Ovary (tissue), 10 donors: ENCODE measurements at regions of chr19 and their contacts with region 1.

Region 1: GRCh38 chr19:33771384-33772101 is 25.1 kb upstream of the KCTD15 start:
- DNase-seq: peak; percentile 63 to 81 (median 78)
- H3K4me3 ChIP-seq: no peak overlapping the region
- H3K27ac ChIP-seq: no peak overlapping the region
- H3K4me1 ChIP-seq: no peaks in the 10 kb centered on the region
- H3K27me3 ChIP-seq: no peaks in the 10 kb centered on the region
- CTCF ChIP-seq: peak; percentile 53 to 74 (median 60)
- EP300 ChIP-seq: no peak
- POLR2A ChIP-seq: no peak

Region 2: DNA sequence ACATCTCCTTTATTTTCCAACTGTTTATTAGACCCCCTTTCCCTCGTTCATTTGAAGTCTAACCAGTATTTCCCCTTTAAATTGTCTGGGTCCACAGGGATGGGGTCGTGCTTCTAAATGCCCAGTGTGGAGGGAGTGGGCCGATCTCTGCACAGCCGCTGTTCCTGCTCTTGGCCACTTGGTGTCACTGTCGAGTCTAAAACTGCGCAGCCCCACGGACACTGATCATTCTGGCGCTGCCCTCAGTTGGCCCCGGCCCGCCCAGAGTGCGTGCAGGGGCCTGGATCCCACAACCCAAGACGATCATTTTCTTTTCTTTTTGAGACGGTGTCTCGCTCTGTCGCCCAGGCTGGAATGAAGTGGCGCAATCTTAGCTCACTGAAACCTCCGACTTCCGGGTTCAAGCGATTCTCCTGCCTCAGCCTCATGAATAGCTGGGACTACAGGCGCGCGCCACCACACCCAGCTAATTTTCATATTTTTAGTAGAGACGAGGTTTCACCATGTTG is 627.6 kb before region 1 on chr19:
- intact Hi-C with region 1: loop called in 1 of 4 experiments (anchors 10 kb)
- DNase-seq: peak; percentile 32 to 73 (median 66)
- H3K4me3 ChIP-seq: no peak overlapping the region
- H3K27ac ChIP-seq: no peak overlapping the region
- H3K4me1 ChIP-seq: no peaks in the 10 kb centered on the region
- H3K27me3 ChIP-seq: no peaks in the 10 kb centered on the region
- CTCF ChIP-seq: peak; percentile 78 to 84 (median 81)
- EP300 ChIP-seq: no peak
- POLR2A ChIP-seq: no peak

Region 3: GRCh38 chr19:33241530-33242101 is 529.9 kb before region 1 on chr19:
- intact Hi-C with region 1: loop called in 3 of 4 experiments (anchors 5 to 10 kb)
- DNase-seq: no peak
- H3K4me3 ChIP-seq: no peak overlapping the region
- H3K27ac ChIP-seq: no peak overlapping the region
- H3K4me1 ChIP-seq: no peaks in the 10 kb centered on the region
- H3K27me3 ChIP-seq: no peaks in the 10 kb centered on the region
- CTCF ChIP-seq: peak; percentile 13 to 46 (median 21)
- EP300 ChIP-seq: no peak
- POLR2A ChIP-seq: no peak

Region 4: GRCh38 chr19:33416307-33417215 is 355.0 kb before region 1 on chr19:
- intact Hi-C with region 1: loop called in 2 of 4 experiments (anchors 5 kb)
- DNase-seq: peak; percentile 50 to 70 (median 62)
- H3K4me3 ChIP-seq: no peak overlapping the region
- H3K27ac ChIP-seq: no peak overlapping the region
- H3K4me1 ChIP-seq: no peaks in the 10 kb centered on the region
- H3K27me3 ChIP-seq: no peaks in the 10 kb centered on the region
- CTCF ChIP-seq: peak in 1 of 3 donors; percentile 47
- EP300 ChIP-seq: no peak
- POLR2A ChIP-seq: no peak

Region 5: DNA sequence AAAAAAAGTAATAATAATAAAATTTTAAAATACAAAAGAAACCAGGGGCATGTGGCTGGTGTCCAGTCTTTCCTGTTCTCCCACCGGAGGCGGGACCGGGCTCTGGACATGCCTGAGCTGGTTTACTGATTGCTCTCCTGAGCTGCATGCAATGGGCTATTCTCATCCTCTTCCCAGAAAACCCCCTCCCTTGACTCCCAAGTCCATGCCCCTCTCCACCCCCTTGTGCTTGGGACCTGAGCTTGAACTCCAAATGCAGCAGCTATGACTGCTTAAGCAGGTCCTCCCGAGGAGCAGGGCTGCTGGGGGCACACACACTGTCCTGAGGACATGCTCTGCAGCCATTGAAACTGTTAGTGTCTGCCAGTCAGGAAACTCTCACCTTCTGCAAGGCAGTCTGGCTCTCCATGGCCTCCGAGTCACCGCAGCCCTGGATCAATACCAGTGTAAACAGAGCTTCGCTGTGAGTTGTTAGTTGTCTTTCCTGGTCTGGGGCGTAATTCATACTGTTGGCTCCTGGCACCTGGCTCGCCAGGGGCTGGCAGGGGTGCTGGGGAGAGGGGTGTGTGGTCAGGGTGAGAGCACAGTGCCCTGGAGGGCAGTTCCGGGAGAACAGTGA is 191.4 kb before region 1 on chr19:
- intact Hi-C with region 1: loop called in 1 of 4 experiments (anchors 10 kb)
- DNase-seq: no peak
- H3K4me3 ChIP-seq: no peak overlapping the region
- H3K27ac ChIP-seq: no peak overlapping the region
- H3K4me1 ChIP-seq: no peaks in the 10 kb centered on the region
- H3K27me3 ChIP-seq: no peaks in the 10 kb centered on the region
- CTCF ChIP-seq: no peak
- EP300 ChIP-seq: no peak
- POLR2A ChIP-seq: no peak

Region 6: GRCh38 chr19:33621811-33622504 is 149.6 kb before region 1 on chr19 and contains the start of gene CHST8:
- intact Hi-C with region 1: no loop called
- DNase-seq: peak in 4 of 5 donors; percentile 36 to 71 (median 65)
- H3K4me3 ChIP-seq: peak within 1 kb of the TSS; percentile 1
- H3K27ac ChIP-seq: no peak within 1 kb of the TSS
- H3K4me1 ChIP-seq: peaks cover 8% of the 10 kb centered on the region
- H3K27me3 ChIP-seq: no peaks in the 10 kb centered on the region
- CTCF ChIP-seq: no peak
- EP300 ChIP-seq: no peak
- POLR2A ChIP-seq: no peak
- total RNA-seq, gene CHST8: 0.48 to 2.5 (median 0.99) TPM

Region 7: DNA sequence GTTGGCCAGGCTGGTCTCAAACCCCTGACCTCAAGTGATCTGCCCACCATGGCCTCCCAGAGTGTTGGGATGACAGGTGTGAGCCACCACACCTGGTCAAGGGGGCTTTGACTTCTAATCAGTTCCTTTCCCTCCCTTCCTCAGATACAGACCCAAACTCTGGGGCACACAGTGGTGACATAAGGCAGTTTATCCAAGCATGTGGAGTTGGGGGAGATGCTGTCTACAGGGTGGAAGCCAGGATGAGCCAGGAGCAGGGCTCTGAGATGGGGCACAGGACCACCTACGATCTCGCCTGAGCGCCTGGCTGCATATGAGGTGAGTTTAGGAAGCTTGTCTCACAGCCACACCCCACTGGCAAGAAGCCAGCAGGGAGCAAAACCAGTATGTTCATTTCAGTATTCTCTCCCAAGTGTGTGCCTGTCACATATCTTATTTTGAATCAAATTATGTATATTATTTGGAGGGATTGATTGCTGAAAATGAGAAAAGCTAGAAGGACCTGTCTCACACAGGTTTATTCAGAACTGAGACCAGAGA is 92.8 kb after region 1 on chr19:
- intact Hi-C with region 1: no loop called
- DNase-seq: no peak
- H3K4me3 ChIP-seq: no peak overlapping the region
- H3K27ac ChIP-seq: no peak overlapping the region
- H3K4me1 ChIP-seq: peaks cover 2% of the 10 kb centered on the region
- H3K27me3 ChIP-seq: no peaks in the 10 kb centered on the region
- CTCF ChIP-seq: no peak
- EP300 ChIP-seq: no peak
- POLR2A ChIP-seq: no peak

Region 8: GRCh38 chr19:34386645-34387445 is 615.3 kb after region 1 on chr19:
- intact Hi-C with region 1: no loop called
- DNase-seq: no peak
- H3K4me3 ChIP-seq: no peak overlapping the region
- H3K27ac ChIP-seq: no peak overlapping the region
- H3K4me1 ChIP-seq: no peaks in the 10 kb centered on the region
- H3K27me3 ChIP-seq: no peaks in the 10 kb centered on the region
- CTCF ChIP-seq: no peak
- EP300 ChIP-seq: no peak
- POLR2A ChIP-seq: no peak